Vagina (tissue), 2 donors: ENCODE measurements at regions of chr21 and their contacts with region 1.

Region 1: GRCh38 chr21:33023574-33024200 is 2.0 kb upstream of the OLIG2 start:
- DNase-seq: no peak
- H3K4me3 ChIP-seq: no peak overlapping the region
- H3K27ac ChIP-seq: no peak overlapping the region
- H3K4me1 ChIP-seq: peaks cover 47% of the 10 kb centered on the region
- H3K27me3 ChIP-seq: peaks cover 38% of the 10 kb centered on the region
- CTCF ChIP-seq: no peak
- POLR2A ChIP-seq: no peak

Region 2: DNA sequence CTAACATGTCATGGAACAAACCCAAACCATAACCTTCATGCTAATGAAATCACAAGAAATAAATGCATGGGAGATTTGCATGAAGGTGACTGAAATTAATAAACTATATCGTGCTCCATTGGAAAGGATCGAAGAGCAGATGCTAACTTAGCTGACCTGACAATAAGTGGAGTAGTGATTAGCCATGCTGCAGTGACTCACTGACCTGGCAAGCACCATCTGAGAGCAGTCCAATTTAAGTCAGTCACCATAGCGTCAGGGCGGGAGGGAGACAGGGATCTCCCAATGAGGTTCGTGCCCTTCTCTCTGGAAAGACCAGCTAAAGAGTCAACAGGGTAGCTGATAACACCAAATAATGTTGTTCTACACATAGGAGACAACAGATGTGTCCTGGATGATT is 23.5 kb after region 1 on chr21:
- intact Hi-C with region 1: no loop called
- DNase-seq: no peak
- H3K4me3 ChIP-seq: no peak overlapping the region
- H3K27ac ChIP-seq: no peak overlapping the region
- H3K4me1 ChIP-seq: no peaks in the 10 kb centered on the region
- H3K27me3 ChIP-seq: no peaks in the 10 kb centered on the region
- CTCF ChIP-seq: no peak
- POLR2A ChIP-seq: no peak

Region 3: GRCh38 chr21:33069976-33070811 is 46.5 kb after region 1 on chr21 and contains the start of gene OLIG1:
- intact Hi-C with region 1: loop called (anchors 2 kb)
- DNase-seq: no peak
- H3K4me3 ChIP-seq: peak within 1 kb of the TSS; percentile 20 to 40
- H3K27ac ChIP-seq: no peak within 1 kb of the TSS
- H3K4me1 ChIP-seq: peaks cover 17% of the 10 kb centered on the region
- H3K27me3 ChIP-seq: peaks cover 6% of the 10 kb centered on the region
- CTCF ChIP-seq: no peak
- POLR2A ChIP-seq: no peak
- total RNA-seq, gene OLIG1: not detected